ENCODE measurements at regions of chr5 and their contacts with region 1.

Region 1: DNA sequence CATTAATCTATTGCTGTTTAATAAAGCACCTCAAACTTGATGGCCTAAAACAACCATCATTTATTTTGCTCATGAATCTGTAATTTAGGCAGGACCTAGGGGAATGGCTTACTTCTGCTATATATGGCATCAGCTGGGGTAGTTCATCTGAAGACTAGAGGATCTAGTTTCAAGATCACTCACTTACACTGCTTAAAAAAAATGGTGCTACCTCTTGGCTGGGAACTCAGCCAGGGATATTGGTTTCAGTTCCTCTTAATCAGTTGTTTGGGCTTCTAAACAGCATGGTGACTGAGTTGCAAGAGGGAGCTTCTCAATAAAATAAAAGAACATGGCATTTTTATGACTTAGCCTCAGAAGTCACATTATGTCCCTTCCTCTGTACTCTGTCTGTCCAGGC is 142.0 kb downstream of the FAM114A2 start:
- DNase-seq: no peak
- H3K4me3 ChIP-seq: no peak overlapping the region
- H3K27ac ChIP-seq: peak overlapping the region in 1 of 2 donors; percentile 1
- H3K4me1 ChIP-seq: peaks cover 0 to 32% of the 10 kb centered on the region in 2 donors
- H3K27me3 ChIP-seq: no peaks in the 10 kb centered on the region
- CTCF ChIP-seq: no peak

Region 2: DNA sequence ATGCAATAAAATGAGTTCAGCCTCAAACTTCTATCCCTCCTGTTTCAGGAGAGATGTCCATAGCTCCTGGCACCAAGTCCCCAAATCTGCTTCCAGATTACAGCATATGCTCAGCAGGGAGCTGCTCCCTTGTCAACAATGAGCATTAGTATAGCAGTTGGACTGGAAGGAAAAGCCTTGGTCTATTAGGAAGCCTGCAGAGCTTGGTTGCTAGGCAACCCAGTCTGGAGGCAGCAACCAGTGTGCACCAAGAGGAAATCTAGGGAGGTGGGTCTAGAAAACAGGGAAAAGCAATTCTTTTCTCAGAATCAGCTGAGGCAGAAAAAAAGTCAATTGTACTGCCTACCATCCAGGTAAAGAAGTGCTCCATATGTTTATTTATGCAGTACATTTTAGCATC is 1262.1 kb before region 1 on chr5:
- intact Hi-C with region 1: loop called (anchors 5 kb)
- DNase-seq: peak in 1 of 2 donors; percentile 66
- H3K4me3 ChIP-seq: no peak overlapping the region
- H3K27ac ChIP-seq: peak overlapping the region; percentile 85 to 90
- H3K4me1 ChIP-seq: peaks cover 0 to 61% of the 10 kb centered on the region in 2 donors
- H3K27me3 ChIP-seq: no peaks in the 10 kb centered on the region
- CTCF ChIP-seq: no peak

Region 3: DNA sequence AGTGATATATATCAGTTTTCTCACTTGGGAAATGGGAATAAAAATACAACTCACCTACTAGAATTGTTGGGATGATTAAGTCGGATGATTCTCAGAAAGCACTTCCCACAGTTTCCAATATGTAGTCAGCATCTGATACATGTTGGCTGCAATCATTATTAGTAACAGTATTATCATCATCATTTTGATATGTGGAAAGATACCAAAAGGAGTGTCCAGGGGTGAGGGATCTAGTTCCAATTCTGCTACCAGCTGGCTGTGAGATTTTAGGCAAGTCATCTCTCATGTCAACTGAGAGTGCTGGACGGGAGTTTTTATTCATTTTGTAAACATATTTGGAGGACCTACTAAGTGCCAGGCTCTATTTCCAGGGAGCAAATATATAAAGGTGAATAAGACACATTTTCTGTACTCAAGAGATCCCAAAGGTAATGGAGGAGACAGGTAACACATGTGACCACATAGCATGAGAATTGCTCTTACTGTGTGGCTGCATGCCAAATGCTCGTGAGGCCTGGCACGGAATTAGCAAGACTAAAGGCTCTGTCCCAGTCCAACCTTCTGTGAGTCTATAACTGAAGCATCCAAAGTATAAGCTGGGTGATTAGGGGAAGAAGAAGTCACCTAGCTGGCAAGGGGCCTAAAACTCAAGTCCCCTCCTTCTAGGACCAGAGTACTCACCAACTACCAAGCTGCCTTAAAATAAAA is 323.2 kb before region 1 on chr5:
- intact Hi-C with region 1: loop called (anchors 5 kb)
- DNase-seq: no peak
- H3K4me3 ChIP-seq: no peak overlapping the region
- H3K27ac ChIP-seq: peak overlapping the region; percentile 68 to 81
- H3K4me1 ChIP-seq: peaks cover 0 to 36% of the 10 kb centered on the region in 2 donors
- H3K27me3 ChIP-seq: no peaks in the 10 kb centered on the region
- CTCF ChIP-seq: no peak

Region 4: GRCh38 chr5:153952893-153953292 is 56.2 kb after region 1 on chr5:
- intact Hi-C with region 1: loop called (anchors 2 kb)
- DNase-seq: no peak
- H3K4me3 ChIP-seq: no peak overlapping the region
- H3K27ac ChIP-seq: peak overlapping the region; percentile 77 to 79
- H3K4me1 ChIP-seq: peaks cover 3 to 4% of the 10 kb centered on the region in 2 donors
- H3K27me3 ChIP-seq: no peaks in the 10 kb centered on the region
- CTCF ChIP-seq: no peak

Measured in ascending aorta (tissue), 2 donors.